ENCODE measurements at regions of chr13 and their contacts with region 1.

Region 1: GRCh38 chr13:33610471-33611015 is 207.4 kb upstream of the RFC3 start:
- DNase-seq: peak; percentile 95
- ATAC-seq: peak; percentile 94
- H3K4me3 ChIP-seq: peak overlapping the region; percentile 55 to 70 (median 59)
- H3K27ac ChIP-seq: peak overlapping the region; percentile 99
- H3K4me1 ChIP-seq: peaks cover 62% of the 10 kb centered on the region
- H3K27me3 ChIP-seq: no peaks in the 10 kb centered on the region
- CTCF ChIP-seq: peak; percentile 58
- EP300 ChIP-seq: no peak
- POLR2A ChIP-seq: peak; percentile 66 to 72
- RAD21 ChIP-seq: peak; percentile 52

Region 2: GRCh38 chr13:33651813-33652212 is 41.3 kb after region 1 on chr13:
- CTCF ChIA-PET with region 1: no interaction called
- POLR2A ChIA-PET with region 1: no interaction called
- in situ Hi-C with region 1: no loop called
- intact Hi-C with region 1: no loop called
- DNase-seq: no peak
- ATAC-seq: no peak
- H3K4me3 ChIP-seq: no peak overlapping the region
- H3K27ac ChIP-seq: no peak overlapping the region
- H3K4me1 ChIP-seq: peaks cover 21% of the 10 kb centered on the region
- H3K27me3 ChIP-seq: no peaks in the 10 kb centered on the region
- CTCF ChIP-seq: no peak
- EP300 ChIP-seq: no peak
- POLR2A ChIP-seq: no peak
- RAD21 ChIP-seq: no peak

Region 3: GRCh38 chr13:33678906-33679657 is 68.5 kb after region 1 on chr13:
- CTCF ChIA-PET with region 1: no interaction called
- POLR2A ChIA-PET with region 1: interaction called, 23 read pairs
- in situ Hi-C with region 1: no loop called
- intact Hi-C with region 1: loop called (anchors 1 kb)
- DNase-seq: peak; percentile 97
- ATAC-seq: peak; percentile 97
- H3K4me3 ChIP-seq: peak overlapping the region; percentile 26 to 62 (median 52); a peak in 5 of 6 replicates
- H3K27ac ChIP-seq: peak overlapping the region; percentile 99
- H3K4me1 ChIP-seq: peaks cover 85% of the 10 kb centered on the region
- H3K27me3 ChIP-seq: no peaks in the 10 kb centered on the region; a peak in 2 of 5 replicates
- CTCF ChIP-seq: 0 out of 2 replicates have a peak, but pooled peaks have one; percentile 4
- EP300 ChIP-seq: peak; percentile 20 to 85; a peak in 2 of 4 replicates
- POLR2A ChIP-seq: peak; percentile 81 to 88
- RAD21 ChIP-seq: peak; percentile 41

Region 4: GRCh38 chr13:33692521-33692920 is 82.0 kb after region 1 on chr13:
- CTCF ChIA-PET with region 1: no interaction called
- POLR2A ChIA-PET with region 1: no interaction called
- in situ Hi-C with region 1: no loop called
- intact Hi-C with region 1: no loop called
- DNase-seq: no peak
- ATAC-seq: no peak
- H3K4me3 ChIP-seq: no peak overlapping the region
- H3K27ac ChIP-seq: no peak overlapping the region
- H3K4me1 ChIP-seq: peaks cover 9% of the 10 kb centered on the region
- H3K27me3 ChIP-seq: no peaks in the 10 kb centered on the region
- CTCF ChIP-seq: no peak
- EP300 ChIP-seq: no peak
- POLR2A ChIP-seq: no peak
- RAD21 ChIP-seq: no peak